Activated CD4-positive, alpha-beta memory T cell treated with anti-CD3 and anti-CD28 coated beads for 36 hours (primary cell): ENCODE measurements at regions of chr17 and their contacts with region 1.

Region 1: GRCh38 chr17:50841949-50842354 is 6.6 kb downstream of the WFIKKN2 start:
- DNase-seq: peak; percentile 77
- H3K4me3 Mint-ChIP-seq: no peak overlapping the region
- H3K27ac Mint-ChIP-seq: no peak overlapping the region
- H3K4me1 Mint-ChIP-seq: no peaks in the 10 kb centered on the region
- H3K27me3 Mint-ChIP-seq: no peaks in the 10 kb centered on the region

Region 2: GRCh38 chr17:50547035-50547735 is 294.8 kb before region 1 on chr17 and contains the start of gene SPATA20:
- CTCF ChIA-PET with region 1: interaction called, 3 read pairs
- POLR2A ChIA-PET with region 1: no interaction called
- intact Hi-C with region 1: loop called (anchors 5 kb)
- DNase-seq: peak; percentile 92
- H3K4me3 Mint-ChIP-seq: peak within 1 kb of the TSS; percentile 71
- H3K27ac Mint-ChIP-seq: peak within 1 kb of the TSS; percentile 58
- H3K4me1 Mint-ChIP-seq: peaks cover 8% of the 10 kb centered on the region
- H3K27me3 Mint-ChIP-seq: peaks cover 6% of the 10 kb centered on the region
- total RNA-seq, gene SPATA20: 22.8 to 23.4 TPM

Region 3: DNA sequence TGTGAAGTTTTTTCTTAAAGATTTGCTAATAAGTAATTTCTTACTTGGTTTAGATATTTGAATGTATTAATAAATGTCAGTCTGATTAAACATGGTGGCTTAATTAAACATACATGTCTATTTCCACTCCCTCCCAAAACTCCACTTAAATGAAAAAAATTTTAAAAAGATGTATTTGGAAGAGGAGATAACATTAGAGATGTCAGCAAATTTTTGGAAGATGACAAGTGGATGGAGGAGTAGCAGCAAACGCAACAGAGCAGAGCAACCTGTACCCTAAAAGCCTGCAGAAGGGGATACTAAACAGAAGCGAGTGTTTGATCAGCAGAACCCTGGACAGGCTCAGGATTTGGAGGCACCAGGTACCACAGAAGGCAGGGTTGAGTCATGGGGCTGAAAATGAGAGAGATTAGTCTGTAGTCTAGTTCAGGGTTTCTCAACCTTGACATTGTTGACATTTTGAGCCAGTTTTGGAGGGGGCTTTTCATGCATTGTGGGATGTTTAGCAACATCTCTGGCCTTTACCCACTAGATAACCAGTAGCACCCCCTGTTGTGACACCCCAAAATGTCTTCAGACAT is 104.7 kb before region 1 on chr17:
- CTCF ChIA-PET with region 1: no interaction called
- POLR2A ChIA-PET with region 1: no interaction called
- intact Hi-C with region 1: no loop called
- DNase-seq: peak; percentile 40
- H3K4me3 Mint-ChIP-seq: no peak overlapping the region
- H3K27ac Mint-ChIP-seq: peak overlapping the region; percentile 64
- H3K4me1 Mint-ChIP-seq: peaks cover 55% of the 10 kb centered on the region
- H3K27me3 Mint-ChIP-seq: no peaks in the 10 kb centered on the region

Region 4: GRCh38 chr17:50783193-50783660 is 58.7 kb before region 1 on chr17:
- CTCF ChIA-PET with region 1: interaction called, 31 read pairs
- POLR2A ChIA-PET with region 1: no interaction called
- intact Hi-C with region 1: loop called (anchors 1 kb)
- DNase-seq: peak; percentile 89
- H3K4me3 Mint-ChIP-seq: peak overlapping the region; percentile 17
- H3K27ac Mint-ChIP-seq: peak overlapping the region; percentile 49
- H3K4me1 Mint-ChIP-seq: peaks cover 22% of the 10 kb centered on the region
- H3K27me3 Mint-ChIP-seq: peaks cover 3% of the 10 kb centered on the region

Region 5: GRCh38 chr17:50816771-50817751 is 24.9 kb before region 1 on chr17:
- CTCF ChIA-PET with region 1: interaction called, 11 read pairs
- POLR2A ChIA-PET with region 1: no interaction called
- intact Hi-C with region 1: no loop called
- DNase-seq: peak; percentile 61
- H3K4me3 Mint-ChIP-seq: no peak overlapping the region
- H3K27ac Mint-ChIP-seq: no peak overlapping the region
- H3K4me1 Mint-ChIP-seq: peaks cover 2% of the 10 kb centered on the region
- H3K27me3 Mint-ChIP-seq: peaks cover 11% of the 10 kb centered on the region

Region 6: GRCh38 chr17:50949989-50950881 is 108.3 kb after region 1 on chr17:
- CTCF ChIA-PET with region 1: interaction called, 10 read pairs
- POLR2A ChIA-PET with region 1: no interaction called
- intact Hi-C with region 1: no loop called
- DNase-seq: peak; percentile 72
- H3K4me3 Mint-ChIP-seq: no peak overlapping the region
- H3K27ac Mint-ChIP-seq: no peak overlapping the region
- H3K4me1 Mint-ChIP-seq: peaks cover 10% of the 10 kb centered on the region
- H3K27me3 Mint-ChIP-seq: no peaks in the 10 kb centered on the region

Region 7: GRCh38 chr17:50956750-50957523 is 115.0 kb after region 1 on chr17:
- CTCF ChIA-PET with region 1: interaction called, 13 read pairs
- POLR2A ChIA-PET with region 1: no interaction called
- intact Hi-C with region 1: no loop called
- DNase-seq: peak; percentile 77
- H3K4me3 Mint-ChIP-seq: no peak overlapping the region
- H3K27ac Mint-ChIP-seq: peak overlapping the region; percentile 44
- H3K4me1 Mint-ChIP-seq: peaks cover 2% of the 10 kb centered on the region
- H3K27me3 Mint-ChIP-seq: no peaks in the 10 kb centered on the region